HCT116 (cell line): ENCODE measurements at regions of chr10 and their contacts with region 1.

Region 1: GRCh38 chr10:100508691-100509150 is 10.9 kb downstream of the SEC31B start:
- DNase-seq: peak; percentile 46
- ATAC-seq: peak; percentile 96
- H3K4me3 ChIP-seq: no peak overlapping the region
- H3K27ac ChIP-seq: no peak overlapping the region
- H3K4me1 ChIP-seq: peaks cover 0 to 4% of the 10 kb centered on the region in 2 experiments; a peak in 1 of 4 replicates
- H3K27me3 ChIP-seq: no peaks in the 10 kb centered on the region
- CTCF ChIP-seq: peak; percentile 76 to 92 (median 91)
- POLR2A ChIP-seq: no peak
- RAD21 ChIP-seq: peak; percentile 92

Region 2: DNA sequence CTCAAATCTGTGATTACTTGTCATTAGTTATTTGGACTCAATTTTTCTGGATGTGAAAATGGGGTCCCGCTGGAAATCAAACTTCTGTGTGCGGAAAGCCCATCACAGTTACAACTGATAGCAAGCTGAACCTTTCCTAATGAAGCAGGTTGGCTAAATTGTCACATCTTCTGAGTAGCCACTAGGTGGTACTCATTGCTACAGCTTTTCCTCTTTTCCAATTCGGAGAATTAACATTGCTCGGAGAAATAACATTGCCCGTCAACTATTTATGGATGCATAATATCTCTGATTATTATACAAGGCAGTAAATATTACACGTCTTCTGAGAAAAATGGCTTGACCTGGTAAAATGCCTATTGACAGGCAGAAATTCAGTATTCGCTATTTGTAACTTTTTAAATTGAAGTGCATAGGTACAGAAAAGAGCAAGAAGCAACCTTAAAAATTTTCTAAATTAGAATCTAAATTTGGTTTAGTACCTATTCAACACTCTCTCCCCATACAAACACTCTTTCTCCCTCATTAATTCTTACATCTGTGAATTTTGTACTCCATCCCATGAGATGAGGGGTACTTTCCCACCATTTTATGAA is 204.9 kb before region 1 on chr10:
- CTCF ChIA-PET with region 1: interaction called, 6 read pairs
- POLR2A ChIA-PET with region 1: no interaction called
- RAD21 ChIA-PET with region 1: no interaction called
- intact Hi-C with region 1: loop called (anchors 1 kb)
- DNase-seq: peak; percentile 32
- ATAC-seq: peak; percentile 87
- H3K4me3 ChIP-seq: no peak overlapping the region
- H3K27ac ChIP-seq: no peak overlapping the region
- H3K4me1 ChIP-seq: peaks cover 4 to 7% of the 10 kb centered on the region in 2 experiments; a peak in 2 of 4 replicates
- H3K27me3 ChIP-seq: no peaks in the 10 kb centered on the region; the same call in 1 of the 2 replicates
- CTCF ChIP-seq: peak; percentile 84 to 91 (median 87); a peak in 5 of 6 replicates
- POLR2A ChIP-seq: no peak
- RAD21 ChIP-seq: peak; percentile 89

Region 3: DNA sequence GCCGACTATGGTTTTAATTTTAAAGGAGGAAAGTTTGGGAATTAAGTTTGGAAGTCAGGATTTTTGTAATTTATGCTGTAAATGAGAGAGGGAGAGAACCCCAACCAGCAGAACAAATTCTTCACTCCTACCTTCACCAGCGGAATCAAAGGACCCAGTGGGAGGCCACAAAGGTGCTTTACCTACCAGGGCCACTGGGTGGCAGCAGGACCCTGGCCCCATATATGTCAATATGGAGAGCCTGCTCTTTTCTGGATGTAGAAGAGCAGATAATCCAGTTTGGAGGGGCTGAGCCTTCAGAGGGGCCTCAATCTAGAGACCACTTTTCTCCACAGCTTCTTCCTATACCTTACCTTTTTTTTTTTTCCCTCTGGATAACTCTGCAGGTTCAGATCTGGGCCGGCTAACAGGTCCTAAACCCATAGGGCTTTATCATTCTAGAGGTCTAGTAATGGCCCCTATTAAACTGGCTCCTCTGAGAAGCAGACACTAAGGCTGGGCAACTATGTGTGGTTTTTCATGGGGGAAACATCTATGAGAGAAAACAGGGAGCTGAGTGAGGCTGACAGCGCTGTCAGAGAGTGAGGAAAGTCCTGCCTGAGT is 170.2 kb before region 1 on chr10:
- CTCF ChIA-PET with region 1: interaction called, 27 read pairs
- POLR2A ChIA-PET with region 1: no interaction called
- RAD21 ChIA-PET with region 1: no interaction called
- intact Hi-C with region 1: loop called (anchors 1 kb)
- DNase-seq: peak; percentile 56
- ATAC-seq: peak; percentile 74
- H3K4me3 ChIP-seq: no peak overlapping the region
- H3K27ac ChIP-seq: no peak overlapping the region; the same call in 1 of the 2 replicates
- H3K4me1 ChIP-seq: peaks cover 3 to 10% of the 10 kb centered on the region in 2 experiments; a peak in 3 of 4 replicates
- H3K27me3 ChIP-seq: 0 out of 2 replicates have a peak, but pooled peaks cover 3% of the 10 kb centered on the region
- CTCF ChIP-seq: peak in 2 of 3 experiments; percentile 99; a peak in 4 of 6 replicates
- POLR2A ChIP-seq: no peak
- RAD21 ChIP-seq: no peak

Region 4: DNA sequence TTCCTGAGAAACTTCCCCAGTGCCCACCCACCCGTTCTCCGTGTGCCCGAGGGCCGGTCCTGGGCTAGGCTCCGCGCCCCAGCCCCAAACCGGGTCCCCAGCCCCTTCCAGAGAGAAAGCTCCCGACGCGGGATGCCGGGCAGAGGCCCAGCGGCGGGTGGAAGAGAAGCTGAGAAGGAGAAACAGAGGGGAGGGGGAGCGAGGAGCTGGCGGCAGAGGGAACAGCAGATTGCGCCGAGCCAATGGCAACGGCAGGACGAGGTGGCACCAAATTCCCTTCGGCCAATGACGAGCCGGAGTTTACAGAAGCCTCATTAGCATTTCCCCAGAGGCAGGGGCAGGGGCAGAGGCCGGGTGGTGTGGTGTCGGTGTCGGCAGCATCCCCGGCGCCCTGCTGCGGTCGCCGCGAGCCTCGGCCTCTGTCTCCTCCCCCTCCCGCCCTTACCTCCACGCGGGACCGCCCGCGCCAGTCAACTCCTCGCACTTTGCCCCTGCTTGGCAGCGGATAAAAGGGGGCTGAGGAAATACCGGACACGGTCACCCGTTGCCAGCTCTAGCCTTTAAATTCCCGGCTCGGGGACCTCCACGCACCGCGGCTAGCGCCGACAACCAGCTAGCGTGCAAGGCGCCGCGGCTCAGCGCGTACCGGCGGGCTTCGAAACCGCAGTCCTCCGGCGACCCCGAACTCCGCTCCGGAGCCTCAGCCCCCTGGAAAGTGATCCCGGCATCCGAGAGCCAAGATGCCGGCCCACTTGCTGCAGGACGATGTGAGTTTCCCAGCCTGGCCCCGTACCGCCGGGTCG is 161.8 kb before region 1 on chr10 and contains the start of gene SCD:
- CTCF ChIA-PET with region 1: interaction called, 27 read pairs
- POLR2A ChIA-PET with region 1: no interaction called
- RAD21 ChIA-PET with region 1: interaction called in 1 of 2 experiments, 3 read pairs
- intact Hi-C with region 1: no loop called
- DNase-seq: peak; percentile 89
- ATAC-seq: peak; percentile 88
- H3K4me3 ChIP-seq: peak within 1 kb of the TSS; percentile 92
- H3K27ac ChIP-seq: peak within 1 kb of the TSS; percentile 96
- H3K4me1 ChIP-seq: peaks cover 44 to 54% of the 10 kb centered on the region in 2 experiments
- H3K27me3 ChIP-seq: no peaks in the 10 kb centered on the region
- CTCF ChIP-seq: no peak
- POLR2A ChIP-seq: peak; percentile 74
- RAD21 ChIP-seq: no peak
- total RNA-seq, gene SCD: 652 TPM

Region 5: GRCh38 chr10:100433253-100434240 is 75.2 kb before region 1 on chr10:
- CTCF ChIA-PET with region 1: interaction called, 14 read pairs
- POLR2A ChIA-PET with region 1: no interaction called
- RAD21 ChIA-PET with region 1: no interaction called
- intact Hi-C with region 1: loop called (anchors 1 kb)
- DNase-seq: peak; percentile 97
- ATAC-seq: peak; percentile 96
- H3K4me3 ChIP-seq: no peak overlapping the region
- H3K27ac ChIP-seq: no peak overlapping the region
- H3K4me1 ChIP-seq: peaks cover 0 to 9% of the 10 kb centered on the region in 2 experiments; a peak in 2 of 4 replicates
- H3K27me3 ChIP-seq: no peaks in the 10 kb centered on the region
- CTCF ChIP-seq: peak; percentile 100
- POLR2A ChIP-seq: no peak
- RAD21 ChIP-seq: peak; percentile 100

Region 6: GRCh38 chr10:100438674-100439315 is 69.9 kb before region 1 on chr10:
- CTCF ChIA-PET with region 1: interaction called, 14 read pairs
- POLR2A ChIA-PET with region 1: no interaction called
- RAD21 ChIA-PET with region 1: interaction called in 1 of 2 experiments, 3 read pairs
- intact Hi-C with region 1: loop called (anchors 1 kb)
- DNase-seq: no peak
- ATAC-seq: no peak
- H3K4me3 ChIP-seq: no peak overlapping the region
- H3K27ac ChIP-seq: no peak overlapping the region
- H3K4me1 ChIP-seq: peaks cover 0 to 4% of the 10 kb centered on the region in 2 experiments; a peak in 2 of 4 replicates
- H3K27me3 ChIP-seq: no peaks in the 10 kb centered on the region
- CTCF ChIP-seq: no peak
- POLR2A ChIP-seq: no peak
- RAD21 ChIP-seq: no peak